ENCODE measurements at regions of chr9 and their contacts with region 1.

Region 1: GRCh38 chr9:2863831-2864230 is 19.9 kb upstream of the PUM3 start:
- DNase-seq: no peak
- H3K4me3 ChIP-seq: no peak overlapping the region
- H3K27ac ChIP-seq: no peak overlapping the region
- H3K4me1 ChIP-seq: no peaks in the 10 kb centered on the region
- H3K27me3 ChIP-seq: peaks cover 22% of the 10 kb centered on the region
- CTCF ChIP-seq: no peak

Region 2: DNA sequence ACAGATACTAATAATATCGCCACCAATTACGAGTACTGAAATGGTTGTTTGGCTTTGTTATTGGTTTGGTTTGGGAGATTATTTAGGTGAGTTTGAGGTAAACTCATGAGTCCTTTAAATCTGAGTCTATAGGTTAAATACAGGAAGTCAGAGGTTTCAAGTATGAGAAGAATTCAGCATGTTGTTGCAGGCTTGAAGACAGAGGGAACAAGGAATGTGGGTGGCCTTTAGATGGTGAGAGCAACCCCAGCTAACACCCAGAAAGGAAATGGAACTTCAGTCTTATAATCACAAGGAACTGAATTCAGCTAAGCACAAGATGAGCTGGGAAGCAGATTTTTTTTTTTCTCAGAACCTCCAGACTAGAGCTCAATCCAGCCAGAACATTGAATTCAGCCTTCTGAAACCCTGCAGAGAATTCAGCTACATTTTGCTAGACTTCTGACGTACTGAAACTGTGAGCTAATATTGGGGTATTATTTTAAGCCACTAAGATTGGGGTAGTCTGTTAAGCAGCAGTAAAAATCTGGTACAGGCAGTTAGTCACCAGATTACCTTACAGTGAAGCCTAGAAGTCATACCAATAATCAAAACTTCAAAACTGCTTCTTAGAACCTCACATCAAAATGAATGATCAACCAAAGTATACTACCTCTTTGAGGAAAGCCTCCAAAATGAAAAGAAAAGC is 196.1 kb after region 1 on chr9:
- CTCF ChIA-PET with region 1: no interaction called
- POLR2A ChIA-PET with region 1: no interaction called
- intact Hi-C with region 1: no loop called
- DNase-seq: no peak
- H3K4me3 ChIP-seq: no peak overlapping the region
- H3K27ac ChIP-seq: no peak overlapping the region
- H3K4me1 ChIP-seq: no peaks in the 10 kb centered on the region
- H3K27me3 ChIP-seq: no peaks in the 10 kb centered on the region
- CTCF ChIP-seq: no peak

Region 3: GRCh38 chr9:3181049-3181953 is 317.5 kb after region 1 on chr9:
- CTCF ChIA-PET with region 1: interaction called, 4 read pairs
- POLR2A ChIA-PET with region 1: no interaction called
- intact Hi-C with region 1: loop called (anchors 2 kb)
- DNase-seq: peak; percentile 37
- H3K4me3 ChIP-seq: peak overlapping the region; percentile 27
- H3K27ac ChIP-seq: no peak overlapping the region
- H3K4me1 ChIP-seq: peaks cover 4% of the 10 kb centered on the region
- H3K27me3 ChIP-seq: peaks cover 69% of the 10 kb centered on the region
- CTCF ChIP-seq: peak; percentile 51

Measured in A673 (cell line).